ENCODE measurements at regions of chr1 and their contacts with region 1.

Region 1: DNA sequence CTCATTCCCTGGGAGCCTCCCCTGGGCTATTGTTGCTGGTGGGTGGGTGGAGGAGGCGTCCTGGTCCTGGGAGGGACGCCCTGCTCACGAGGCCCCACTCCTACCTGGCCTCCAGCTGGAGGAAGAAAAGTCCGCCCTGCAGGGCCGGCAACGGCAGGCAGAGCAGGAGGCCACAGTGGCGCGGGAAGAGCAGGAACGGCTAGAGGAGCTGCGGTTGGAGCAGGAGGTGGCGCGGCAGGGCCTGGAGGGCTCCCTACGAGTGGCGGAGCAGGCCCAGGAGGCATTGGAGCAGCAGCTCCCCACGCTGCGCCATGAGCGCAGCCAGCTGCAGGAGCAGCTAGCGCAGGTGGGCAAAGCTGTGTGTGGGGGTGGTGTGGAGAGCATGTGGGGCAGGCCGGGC is 24.9 kb downstream of the CROCC start:
- DNase-seq: no peak
- ATAC-seq: no peak
- H3K4me3 Mint-ChIP-seq: no peak overlapping the region
- H3K27ac Mint-ChIP-seq: no peak overlapping the region
- H3K4me1 Mint-ChIP-seq: no peaks in the 10 kb centered on the region
- H3K27me3 Mint-ChIP-seq: no peaks in the 10 kb centered on the region

Region 2: GRCh38 chr1:16625497-16626408 is 320.9 kb before region 1 on chr1:
- CTCF ChIA-PET with region 1: interaction called, 15 read pairs
- POLR2A ChIA-PET with region 1: no interaction called
- DNase-seq: no peak
- ATAC-seq: no peak
- H3K4me3 Mint-ChIP-seq: no peak overlapping the region
- H3K27ac Mint-ChIP-seq: no peak overlapping the region
- H3K4me1 Mint-ChIP-seq: peaks cover 8% of the 10 kb centered on the region
- H3K27me3 Mint-ChIP-seq: no peaks in the 10 kb centered on the region

Region 3: GRCh38 chr1:16960560-16961296 is 14.1 kb after region 1 on chr1:
- CTCF ChIA-PET with region 1: interaction called, 37 read pairs
- POLR2A ChIA-PET with region 1: no interaction called
- DNase-seq: peak; percentile 85
- ATAC-seq: peak; percentile 94
- H3K4me3 Mint-ChIP-seq: peak overlapping the region; percentile 65
- H3K27ac Mint-ChIP-seq: peak overlapping the region; percentile 66
- H3K4me1 Mint-ChIP-seq: peaks cover 12% of the 10 kb centered on the region
- H3K27me3 Mint-ChIP-seq: no peaks in the 10 kb centered on the region

Region 4: GRCh38 chr1:17045634-17046333 is 99.1 kb after region 1 on chr1:
- CTCF ChIA-PET with region 1: interaction called, 29 read pairs
- POLR2A ChIA-PET with region 1: no interaction called
- DNase-seq: no peak
- ATAC-seq: no peak
- H3K4me3 Mint-ChIP-seq: no peak overlapping the region
- H3K27ac Mint-ChIP-seq: peak overlapping the region; percentile 61
- H3K4me1 Mint-ChIP-seq: peaks cover 21% of the 10 kb centered on the region
- H3K27me3 Mint-ChIP-seq: no peaks in the 10 kb centered on the region

Measured in activated CD8-positive, alpha-beta T cell treated with anti-CD3 and anti-CD28 coated beads, Interleukin-2, amount 10 ng/mL, durations not matched to agents 7 days and 5 days (primary cell).